HCT116 (cell line): ENCODE measurements at regions of chr1 and their contacts with region 1.

Region 1: DNA sequence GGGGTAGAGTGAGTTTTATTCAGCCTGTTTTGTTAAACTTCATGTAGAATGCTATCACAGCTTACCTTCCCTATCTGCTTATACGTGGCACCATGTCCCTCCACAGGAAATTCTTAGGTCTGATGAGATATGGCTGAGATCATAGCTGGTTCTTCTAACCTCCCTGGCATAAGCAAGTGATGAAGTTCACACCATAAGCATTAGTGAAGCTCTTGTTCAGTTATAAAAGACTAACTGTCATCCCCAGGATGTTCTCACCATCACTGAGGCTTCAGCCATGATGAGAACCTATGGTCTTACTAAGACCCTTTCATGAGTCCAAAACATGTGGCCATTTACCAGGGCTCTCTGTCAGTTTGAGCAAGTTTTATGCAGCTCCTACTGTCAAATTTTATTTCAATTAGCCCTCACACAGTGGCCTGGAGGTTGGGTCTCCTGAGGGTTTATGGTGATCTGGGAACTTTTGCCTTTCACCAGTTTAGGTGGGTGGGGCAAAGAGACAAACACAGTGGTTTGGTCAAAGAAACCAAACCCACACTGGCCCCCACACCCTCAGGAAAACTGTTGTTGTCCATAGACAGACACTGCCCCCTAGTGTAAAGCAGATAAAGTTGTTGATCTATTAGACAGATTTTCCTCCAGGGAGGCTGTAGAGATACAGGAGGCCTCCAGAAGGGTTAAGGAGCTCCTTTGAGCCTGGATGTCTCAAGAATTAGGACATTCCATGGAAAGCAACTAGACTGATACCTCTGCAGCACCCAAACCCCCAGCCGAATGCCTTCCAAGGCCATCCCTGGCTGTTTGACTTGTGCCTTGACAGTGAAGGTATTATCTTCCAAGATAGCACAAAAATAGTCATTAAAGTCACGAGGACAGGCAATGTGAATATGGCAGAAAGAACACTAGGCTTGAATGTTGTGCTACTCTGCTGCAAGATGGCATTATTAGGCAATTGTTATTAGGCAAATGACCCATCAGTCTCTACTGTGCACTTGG is 5.0 kb downstream of the SLC22A15 start:
- DNase-seq: peak; percentile 42
- ATAC-seq: peak; percentile 68
- H3K4me3 ChIP-seq: no peak overlapping the region
- H3K27ac ChIP-seq: no peak overlapping the region
- H3K4me1 ChIP-seq: peaks cover 8 to 18% of the 10 kb centered on the region in 2 experiments; a peak in 3 of 4 replicates
- H3K27me3 ChIP-seq: no peaks in the 10 kb centered on the region
- CTCF ChIP-seq: peak; percentile 74 to 92 (median 76); a peak in 5 of 6 replicates
- POLR2A ChIP-seq: no peak
- RAD21 ChIP-seq: peak; percentile 88

Region 2: DNA sequence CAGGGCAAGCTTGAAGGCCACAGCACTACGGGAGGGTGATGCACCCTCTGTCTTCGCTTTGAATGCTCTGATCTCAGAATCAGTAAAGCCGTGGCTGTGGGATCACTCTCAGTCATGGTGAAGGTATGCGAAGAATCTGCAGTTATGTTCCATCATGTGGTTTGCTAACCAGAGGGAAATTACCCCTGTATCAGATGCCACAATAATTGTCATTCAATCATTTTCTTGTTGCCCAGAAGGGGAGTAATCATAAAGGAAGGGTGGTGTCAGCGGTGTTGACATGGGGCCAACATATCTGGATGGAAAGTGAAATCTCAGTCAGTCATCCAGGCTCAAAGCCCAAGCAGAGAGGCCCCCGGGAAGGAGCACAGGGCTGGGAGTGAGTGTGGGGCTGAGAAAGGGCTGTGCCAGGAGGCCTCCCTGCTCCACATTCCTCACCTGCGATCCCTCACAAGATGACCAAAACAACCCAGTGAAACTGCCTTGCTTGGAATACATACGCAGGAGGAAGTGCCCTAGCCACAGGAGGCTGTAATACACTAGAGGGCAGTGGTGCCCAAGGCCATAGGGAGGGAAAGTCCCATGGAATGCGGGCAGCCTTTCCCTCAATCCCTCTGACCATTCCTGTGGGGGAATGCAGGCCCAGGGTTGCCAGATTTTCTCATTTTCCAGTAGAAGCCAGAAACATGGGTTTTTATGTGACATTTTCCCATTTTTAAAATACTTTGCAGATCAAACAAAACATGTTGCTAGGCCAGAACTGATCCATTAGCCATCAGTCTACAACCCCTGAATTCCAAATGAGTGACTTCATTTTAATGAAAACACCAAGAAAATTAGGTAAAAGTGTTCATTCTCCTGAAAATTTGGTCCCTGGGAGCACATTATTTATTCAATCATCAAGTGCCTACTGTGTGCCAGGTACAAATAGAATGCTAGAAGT is 435.2 kb before region 1 on chr1:
- CTCF ChIA-PET with region 1: no interaction called
- POLR2A ChIA-PET with region 1: no interaction called
- RAD21 ChIA-PET with region 1: no interaction called
- intact Hi-C with region 1: loop called (anchors 5 kb)
- DNase-seq: peak; percentile 76
- ATAC-seq: peak; percentile 93
- H3K4me3 ChIP-seq: peak overlapping the region; percentile 14 to 45
- H3K27ac ChIP-seq: peak overlapping the region; percentile 64
- H3K4me1 ChIP-seq: peaks cover 15 to 25% of the 10 kb centered on the region in 2 experiments
- H3K27me3 ChIP-seq: no peaks in the 10 kb centered on the region
- CTCF ChIP-seq: peak; percentile 80 to 89 (median 83)
- POLR2A ChIP-seq: no peak
- RAD21 ChIP-seq: peak; percentile 82

Region 3: DNA sequence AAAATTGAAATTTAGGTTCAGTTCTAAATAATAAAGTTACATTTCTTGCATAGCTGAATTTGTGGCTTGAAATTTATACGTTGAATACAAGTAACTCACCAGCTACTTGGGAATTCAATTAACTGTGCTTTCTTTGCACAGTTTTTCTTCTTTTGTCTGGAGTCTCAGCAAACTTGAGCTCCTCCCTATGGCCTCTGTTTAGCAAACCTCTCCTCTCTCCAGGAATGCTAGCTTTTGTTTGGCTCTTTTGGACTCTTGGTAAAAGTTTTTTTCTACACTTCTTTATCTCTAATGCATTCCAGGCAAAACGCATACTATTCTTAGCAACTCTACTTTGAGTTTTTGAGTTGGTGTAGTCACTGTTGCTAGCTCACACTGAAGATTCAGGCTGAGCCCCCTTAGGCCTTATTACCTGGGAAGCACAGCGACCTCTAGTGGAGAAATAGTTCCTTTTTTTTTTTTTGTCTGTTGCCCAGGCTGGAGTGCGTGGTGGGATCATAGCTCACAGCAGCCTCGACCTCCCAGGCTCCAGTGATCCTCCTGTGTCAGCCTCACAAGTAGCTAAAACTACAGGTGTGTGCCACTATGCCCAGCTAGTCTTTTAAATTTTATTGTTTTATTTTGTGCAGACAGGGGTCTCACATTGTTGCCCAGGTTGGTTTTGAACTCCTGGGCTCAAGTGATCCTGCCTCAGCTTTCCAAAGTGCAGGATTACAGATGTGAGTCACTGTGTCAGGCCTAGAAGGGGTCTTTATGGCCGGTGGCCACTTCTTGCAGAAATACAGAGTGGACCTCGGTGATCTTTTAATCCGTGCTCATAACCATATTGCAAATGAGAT is 274.5 kb before region 1 on chr1:
- CTCF ChIA-PET with region 1: interaction called, 13 read pairs
- POLR2A ChIA-PET with region 1: no interaction called
- RAD21 ChIA-PET with region 1: no interaction called
- intact Hi-C with region 1: no loop called
- DNase-seq: peak; percentile 51
- ATAC-seq: peak; percentile 87
- H3K4me3 ChIP-seq: no peak overlapping the region
- H3K27ac ChIP-seq: no peak overlapping the region
- H3K4me1 ChIP-seq: no peaks in the 10 kb centered on the region
- H3K27me3 ChIP-seq: no peaks in the 10 kb centered on the region; the same call in 1 of the 2 replicates
- CTCF ChIP-seq: peak; percentile 60 to 86 (median 64); a peak in 5 of 6 replicates
- POLR2A ChIP-seq: no peak
- RAD21 ChIP-seq: peak; percentile 65

Region 4: GRCh38 chr1:115771847-115772457 is 209.3 kb before region 1 on chr1:
- CTCF ChIA-PET with region 1: interaction called, 30 read pairs
- POLR2A ChIA-PET with region 1: no interaction called
- RAD21 ChIA-PET with region 1: interaction called in 1 of 2 experiments, 7 read pairs
- intact Hi-C with region 1: loop called (anchors 1 kb)
- DNase-seq: peak; percentile 82
- ATAC-seq: peak; percentile 96
- H3K4me3 ChIP-seq: peak overlapping the region; percentile 12 to 29; a peak in 2 of 4 replicates
- H3K27ac ChIP-seq: peak overlapping the region; percentile 38; the same call in 1 of the 2 replicates
- H3K4me1 ChIP-seq: peaks cover 5 to 13% of the 10 kb centered on the region in 2 experiments; a peak in 3 of 4 replicates
- H3K27me3 ChIP-seq: no peaks in the 10 kb centered on the region
- CTCF ChIP-seq: peak; percentile 74 to 80 (median 79)
- POLR2A ChIP-seq: no peak
- RAD21 ChIP-seq: peak; percentile 92

Region 5: GRCh38 chr1:115807723-115808122 is 173.6 kb before region 1 on chr1:
- CTCF ChIA-PET with region 1: interaction called, 22 read pairs
- POLR2A ChIA-PET with region 1: interaction called, 3 read pairs
- RAD21 ChIA-PET with region 1: interaction called in 1 of 2 experiments, 4 read pairs
- intact Hi-C with region 1: loop called (anchors 1 kb)
- DNase-seq: peak; percentile 78
- ATAC-seq: peak; percentile 94
- H3K4me3 ChIP-seq: no peak overlapping the region
- H3K27ac ChIP-seq: no peak overlapping the region
- H3K4me1 ChIP-seq: no peaks in the 10 kb centered on the region
- H3K27me3 ChIP-seq: no peaks in the 10 kb centered on the region
- CTCF ChIP-seq: peak; percentile 68 to 82 (median 77); a peak in 5 of 6 replicates
- POLR2A ChIP-seq: no peak
- RAD21 ChIP-seq: peak; percentile 78